Endothelial cell of umbilical vein (primary cell): ENCODE measurements at regions of chr6 and their contacts with region 1.

Region 1: DNA sequence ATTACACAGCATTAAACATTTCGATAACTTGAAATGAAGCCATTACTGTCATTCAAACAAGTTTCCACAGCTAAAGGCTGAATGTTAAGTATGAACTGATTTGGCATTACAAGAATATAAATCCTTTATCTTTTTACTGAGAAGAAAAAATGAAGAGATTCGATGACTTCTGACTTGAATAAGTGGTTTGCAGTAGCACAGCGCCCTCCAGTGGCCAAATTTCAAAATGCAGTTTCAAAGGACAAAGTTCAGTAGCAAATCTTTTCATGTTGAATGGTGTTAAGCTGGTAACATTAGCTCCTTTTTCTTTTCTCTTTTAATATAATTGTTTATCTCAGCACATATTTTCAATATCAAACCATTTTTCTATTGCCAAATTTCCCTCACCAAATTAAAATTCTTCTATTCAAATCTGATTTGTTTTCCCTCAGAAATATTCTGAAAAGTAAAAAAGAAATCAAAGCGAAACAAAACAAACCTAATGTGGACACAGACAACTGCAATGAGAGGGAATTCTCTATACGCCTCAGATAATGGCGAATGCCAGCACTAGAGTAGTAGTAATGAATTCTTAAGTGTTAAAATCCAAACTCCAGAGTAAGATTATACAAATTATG is 145.7 kb downstream of the BTBD9 start:
- DNase-seq: peak; percentile 87
- H3K4me3 ChIP-seq: no peak overlapping the region
- H3K27ac ChIP-seq: no peak overlapping the region
- H3K4me1 ChIP-seq: no peaks in the 10 kb centered on the region
- H3K27me3 ChIP-seq: no peaks in the 10 kb centered on the region
- CTCF ChIP-seq: peak; percentile 56 to 59
- POLR2A ChIP-seq: no peak

Region 2: DNA sequence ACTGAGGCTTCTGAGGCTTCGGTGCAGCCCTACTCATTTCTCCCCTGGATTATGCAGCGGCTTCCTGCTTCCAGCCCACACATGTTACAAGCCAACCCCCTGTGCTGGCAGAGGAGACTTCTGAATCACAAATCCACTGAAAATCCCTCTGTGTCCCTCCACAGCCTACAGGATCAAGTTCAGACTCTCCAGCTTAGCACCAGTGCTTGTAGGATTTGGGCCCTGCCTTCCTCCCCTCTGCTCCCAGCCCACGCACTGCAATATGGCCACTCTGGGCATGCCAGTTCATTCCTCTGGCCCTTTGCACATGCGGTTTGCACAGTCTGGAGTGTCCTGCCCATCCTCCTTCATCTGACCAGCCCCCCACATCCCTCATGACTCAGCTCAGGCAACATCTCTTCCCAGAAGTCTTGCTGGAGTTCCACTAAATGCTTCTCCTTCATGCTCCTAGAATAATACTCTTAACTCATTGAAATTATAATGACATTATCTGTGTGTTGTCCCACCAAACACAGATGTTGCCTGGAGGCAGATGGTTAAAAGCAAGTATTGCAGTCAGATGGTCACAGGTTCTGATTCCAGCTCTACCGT is 780.4 kb before region 1 on chr6:
- CTCF ChIA-PET with region 1: interaction called, 3 read pairs
- POLR2A ChIA-PET with region 1: no interaction called
- dilution Hi-C with region 1: no loop called
- intact Hi-C with region 1: loop called (anchors 5 kb)
- DNase-seq: no peak
- H3K4me3 ChIP-seq: no peak overlapping the region
- H3K27ac ChIP-seq: no peak overlapping the region
- H3K4me1 ChIP-seq: peaks cover 5% of the 10 kb centered on the region
- H3K27me3 ChIP-seq: no peaks in the 10 kb centered on the region
- CTCF ChIP-seq: no peak
- POLR2A ChIP-seq: no peak

Region 3: GRCh38 chr6:38034274-38034914 is 459.6 kb before region 1 on chr6:
- CTCF ChIA-PET with region 1: interaction called, 91 read pairs
- POLR2A ChIA-PET with region 1: no interaction called
- dilution Hi-C with region 1: no loop called
- intact Hi-C with region 1: loop called (anchors 1 kb)
- DNase-seq: peak; percentile 49
- H3K4me3 ChIP-seq: no peak overlapping the region
- H3K27ac ChIP-seq: no peak overlapping the region
- H3K4me1 ChIP-seq: no peaks in the 10 kb centered on the region
- H3K27me3 ChIP-seq: no peaks in the 10 kb centered on the region
- CTCF ChIP-seq: peak; percentile 15 to 52
- POLR2A ChIP-seq: no peak

Region 4: GRCh38 chr6:38215225-38215624 is 278.8 kb before region 1 on chr6:
- CTCF ChIA-PET with region 1: no interaction called
- POLR2A ChIA-PET with region 1: no interaction called
- dilution Hi-C with region 1: no loop called
- intact Hi-C with region 1: no loop called
- DNase-seq: no peak
- H3K4me3 ChIP-seq: no peak overlapping the region
- H3K27ac ChIP-seq: no peak overlapping the region
- H3K4me1 ChIP-seq: peaks cover 14% of the 10 kb centered on the region
- H3K27me3 ChIP-seq: no peaks in the 10 kb centered on the region
- CTCF ChIP-seq: no peak
- POLR2A ChIP-seq: no peak

Region 5: GRCh38 chr6:38262026-38262425 is 232.0 kb before region 1 on chr6:
- CTCF ChIA-PET with region 1: interaction called, 12 read pairs
- POLR2A ChIA-PET with region 1: no interaction called
- dilution Hi-C with region 1: no loop called
- intact Hi-C with region 1: no loop called
- DNase-seq: peak; percentile 90
- H3K4me3 ChIP-seq: no peak overlapping the region
- H3K27ac ChIP-seq: peak overlapping the region; percentile 66
- H3K4me1 ChIP-seq: peaks cover 39% of the 10 kb centered on the region
- H3K27me3 ChIP-seq: no peaks in the 10 kb centered on the region
- CTCF ChIP-seq: no peak
- POLR2A ChIP-seq: no peak

Region 6: GRCh38 chr6:38337819-38338465 is 156.1 kb before region 1 on chr6:
- CTCF ChIA-PET with region 1: no interaction called
- POLR2A ChIA-PET with region 1: no interaction called
- dilution Hi-C with region 1: no loop called
- intact Hi-C with region 1: no loop called
- DNase-seq: peak; percentile 32
- H3K4me3 ChIP-seq: no peak overlapping the region
- H3K27ac ChIP-seq: no peak overlapping the region
- H3K4me1 ChIP-seq: no peaks in the 10 kb centered on the region
- H3K27me3 ChIP-seq: no peaks in the 10 kb centered on the region
- CTCF ChIP-seq: no peak
- POLR2A ChIP-seq: no peak

Region 7: DNA sequence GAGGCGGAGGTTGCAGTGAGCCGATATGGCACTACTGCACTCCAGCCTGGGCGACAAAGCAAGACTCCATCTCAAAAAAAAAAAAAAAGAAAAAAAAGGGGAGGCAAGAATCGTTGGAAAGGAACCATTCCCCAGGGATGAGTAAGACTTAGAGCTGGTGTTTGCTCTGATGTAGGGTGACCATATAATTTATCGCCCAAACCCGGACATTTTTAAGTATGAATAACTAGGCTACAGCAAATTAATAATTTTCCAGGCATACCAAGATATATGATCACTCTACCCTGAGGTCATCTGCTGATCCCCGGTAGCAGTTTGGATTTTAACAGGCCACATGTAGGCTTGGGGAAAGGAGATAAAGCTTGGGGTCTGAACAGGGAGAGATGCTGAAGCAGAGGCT is 115.2 kb before region 1 on chr6:
- CTCF ChIA-PET with region 1: no interaction called
- POLR2A ChIA-PET with region 1: no interaction called
- dilution Hi-C with region 1: no loop called
- intact Hi-C with region 1: no loop called
- DNase-seq: no peak
- H3K4me3 ChIP-seq: no peak overlapping the region
- H3K27ac ChIP-seq: no peak overlapping the region
- H3K4me1 ChIP-seq: no peaks in the 10 kb centered on the region
- H3K27me3 ChIP-seq: no peaks in the 10 kb centered on the region
- CTCF ChIP-seq: no peak
- POLR2A ChIP-seq: no peak

Region 8: GRCh38 chr6:38404900-38405556 is 89.0 kb before region 1 on chr6:
- CTCF ChIA-PET with region 1: no interaction called
- POLR2A ChIA-PET with region 1: no interaction called
- dilution Hi-C with region 1: no loop called
- intact Hi-C with region 1: no loop called
- DNase-seq: peak; percentile 32
- H3K4me3 ChIP-seq: no peak overlapping the region
- H3K27ac ChIP-seq: no peak overlapping the region
- H3K4me1 ChIP-seq: no peaks in the 10 kb centered on the region
- H3K27me3 ChIP-seq: no peaks in the 10 kb centered on the region
- CTCF ChIP-seq: no peak
- POLR2A ChIP-seq: no peak

Region 9: GRCh38 chr6:38517005-38517404 is 23.0 kb after region 1 on chr6:
- CTCF ChIA-PET with region 1: interaction called, 16 read pairs
- POLR2A ChIA-PET with region 1: no interaction called
- dilution Hi-C with region 1: no loop called
- intact Hi-C with region 1: no loop called
- DNase-seq: no peak
- H3K4me3 ChIP-seq: no peak overlapping the region
- H3K27ac ChIP-seq: no peak overlapping the region
- H3K4me1 ChIP-seq: peaks cover 4% of the 10 kb centered on the region
- H3K27me3 ChIP-seq: no peaks in the 10 kb centered on the region
- CTCF ChIP-seq: no peak
- POLR2A ChIP-seq: no peak

Region 10: DNA sequence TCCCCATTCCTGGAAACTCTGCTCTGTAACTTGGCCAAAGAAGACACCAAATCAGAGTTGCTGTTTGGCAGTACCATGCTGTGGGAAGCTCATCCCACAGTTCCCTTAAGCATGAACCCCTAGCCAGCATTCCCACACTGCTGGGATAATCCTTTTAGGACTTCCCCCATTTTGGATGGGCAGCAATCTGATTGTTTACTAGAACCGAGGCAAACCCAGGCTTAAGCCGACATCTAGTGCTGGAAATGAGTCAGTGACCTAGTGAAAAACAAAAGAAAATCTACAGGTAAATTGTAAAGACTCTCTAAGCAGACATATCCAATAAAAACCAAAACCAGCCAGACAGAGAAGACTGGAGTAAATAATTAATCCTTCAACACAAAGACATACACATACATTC is 226.3 kb after region 1 on chr6:
- CTCF ChIA-PET with region 1: interaction called, 4 read pairs
- POLR2A ChIA-PET with region 1: no interaction called
- dilution Hi-C with region 1: no loop called
- intact Hi-C with region 1: loop called (anchors 2 kb)
- DNase-seq: peak; percentile 49
- H3K4me3 ChIP-seq: no peak overlapping the region
- H3K27ac ChIP-seq: no peak overlapping the region
- H3K4me1 ChIP-seq: peaks cover 12% of the 10 kb centered on the region
- H3K27me3 ChIP-seq: no peaks in the 10 kb centered on the region
- CTCF ChIP-seq: peak; percentile 14 to 20
- POLR2A ChIP-seq: no peak